ENCODE measurements at regions of chr10 and their contacts with region 1.

Region 1: DNA sequence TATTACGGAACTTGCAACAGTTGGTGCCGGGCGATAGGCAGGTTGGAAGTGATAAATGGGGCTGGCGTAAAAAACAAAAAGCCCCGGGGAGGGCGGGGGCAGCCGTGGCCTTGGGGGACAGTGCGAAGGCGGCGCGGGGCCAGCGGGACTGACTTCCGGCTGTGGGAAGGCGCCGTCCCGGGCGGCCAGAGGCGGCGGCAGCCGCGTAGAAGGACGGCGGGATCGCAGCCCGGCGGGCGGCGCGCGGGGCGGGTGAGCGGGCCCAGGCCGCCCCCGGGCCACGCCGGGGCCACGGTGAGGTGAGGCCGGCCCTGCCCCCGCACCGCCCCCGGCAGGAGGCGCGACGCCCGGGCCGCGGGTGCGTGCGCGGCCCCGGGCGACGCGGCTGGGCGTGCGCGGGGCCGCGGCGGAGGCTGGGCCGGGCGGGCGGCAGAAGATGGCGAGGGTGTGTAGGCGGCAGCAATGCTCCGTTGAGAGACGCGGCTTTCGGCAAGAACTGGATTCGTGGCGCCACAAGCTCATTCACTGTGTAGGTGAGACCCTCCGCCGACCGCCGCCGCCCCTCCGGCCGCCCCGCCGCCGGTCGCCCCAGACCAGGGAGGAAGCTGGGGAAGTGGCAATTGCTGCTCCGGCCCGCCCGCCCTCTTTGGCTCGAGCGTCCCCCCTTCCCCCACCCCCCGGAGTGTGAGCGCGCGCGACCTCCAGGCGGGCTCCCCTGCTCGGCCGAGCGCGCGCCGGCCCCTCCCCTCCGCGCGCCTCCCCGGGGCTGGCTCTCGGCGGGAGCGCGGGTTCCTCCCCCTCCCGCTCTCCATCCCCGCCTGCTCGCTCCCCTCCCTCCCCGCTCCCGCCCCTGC is at the start of gene LCOR:
- DNase-seq: peak; percentile 66 to 94 (median 80)
- ATAC-seq: peak; percentile 69
- H3K4me3 ChIP-seq: peak within 1 kb of the TSS; percentile 72 to 76
- H3K4me3 Mint-ChIP-seq: peak within 1 kb of the TSS; percentile 89
- H3K27ac ChIP-seq: peak within 1 kb of the TSS; percentile 64 to 71
- H3K27ac Mint-ChIP-seq: peak within 1 kb of the TSS; percentile 97
- H3K4me1 ChIP-seq: peaks cover 25% of the 10 kb centered on the region
- H3K4me1 Mint-ChIP-seq: peaks cover 47% of the 10 kb centered on the region
- H3K27me3 ChIP-seq: no peaks in the 10 kb centered on the region
- H3K27me3 Mint-ChIP-seq: no peaks in the 10 kb centered on the region
- CTCF ChIP-seq: no peak
- total RNA-seq, gene LCOR: 57.9 to 62.0 TPM

Region 2: DNA sequence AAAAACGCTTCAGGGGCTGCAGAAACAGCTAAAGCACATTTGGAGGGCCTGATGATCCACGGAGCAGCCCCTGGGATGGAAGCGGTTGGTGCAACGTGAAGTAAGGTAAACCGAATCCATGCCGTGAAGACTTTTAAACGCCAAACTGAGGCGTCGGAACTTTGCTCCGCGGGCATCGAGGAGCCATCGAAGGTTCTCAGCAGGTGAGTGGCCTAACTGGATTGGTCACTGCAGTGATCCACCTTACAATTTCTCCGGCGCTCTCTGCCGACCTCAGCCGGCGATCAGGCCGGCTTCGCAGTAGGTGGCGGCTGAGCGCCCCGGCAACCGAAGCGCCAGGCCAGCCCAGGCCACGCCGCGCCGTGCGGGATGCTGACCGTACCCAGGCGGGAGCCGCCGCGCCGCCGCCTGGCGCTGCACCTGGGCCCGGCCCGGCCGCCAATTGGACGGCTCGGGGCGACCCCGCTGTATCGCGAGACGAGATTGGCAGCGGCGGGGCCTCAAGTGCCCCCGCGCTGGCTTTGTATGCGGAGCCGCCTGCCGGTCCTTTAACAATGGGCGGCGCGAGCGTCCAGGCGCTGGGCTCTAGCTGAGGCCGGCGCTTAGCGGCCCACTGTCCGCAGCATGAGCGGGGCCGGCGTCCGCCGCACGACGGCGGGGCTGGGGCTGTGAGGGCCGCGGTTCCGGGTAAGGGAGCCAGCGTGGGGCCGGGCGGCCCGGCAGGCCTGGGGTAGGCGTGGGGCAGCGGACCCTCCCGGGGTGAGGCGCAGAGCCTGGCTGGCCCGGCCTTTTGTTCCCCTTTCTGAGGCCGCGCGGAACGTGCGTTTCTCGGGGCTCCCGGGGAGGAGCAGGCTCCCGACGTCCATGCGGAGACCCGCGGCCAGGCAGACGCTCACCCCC is 788.8 kb before region 1 on chr10 and contains the start of gene CCNJ:
- CTCF ChIA-PET with region 1: no interaction called
- POLR2A ChIA-PET with region 1: no interaction called
- intact Hi-C with region 1: loop called in 1 of 2 experiments (anchors 10 kb)
- DNase-seq: peak; percentile 64 to 91 (median 82)
- ATAC-seq: peak; percentile 87
- H3K4me3 ChIP-seq: peak within 1 kb of the TSS; percentile 81 to 92
- H3K4me3 Mint-ChIP-seq: peak within 1 kb of the TSS; percentile 94
- H3K27ac ChIP-seq: peak within 1 kb of the TSS; percentile 70
- H3K27ac Mint-ChIP-seq: peak within 1 kb of the TSS; percentile 90
- H3K4me1 ChIP-seq: peaks cover 18% of the 10 kb centered on the region
- H3K4me1 Mint-ChIP-seq: peaks cover 48% of the 10 kb centered on the region
- H3K27me3 ChIP-seq: no peaks in the 10 kb centered on the region
- H3K27me3 Mint-ChIP-seq: peaks cover 5% of the 10 kb centered on the region
- CTCF ChIP-seq: no peak
- total RNA-seq, gene CCNJ: 10.0 to 10.7 TPM

Region 3: DNA sequence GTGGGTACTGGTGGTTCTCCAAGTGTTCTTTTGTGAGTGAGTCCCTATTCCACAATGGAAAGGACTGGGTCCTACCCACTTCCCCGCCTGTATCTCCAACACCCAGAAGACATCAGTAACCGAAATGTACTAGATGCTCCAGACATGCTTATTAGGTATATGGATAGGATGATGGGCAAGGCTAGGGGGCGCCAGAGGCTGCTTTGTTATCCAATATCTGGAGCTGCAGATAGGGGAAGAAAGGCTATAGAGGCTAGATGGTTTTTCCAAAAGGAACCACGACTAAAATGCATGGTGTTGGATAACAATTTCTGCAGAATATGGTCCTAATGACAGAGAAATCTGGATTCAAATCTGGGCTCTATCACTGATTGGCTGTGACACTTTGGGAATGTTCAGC is 189.1 kb before region 1 on chr10:
- CTCF ChIA-PET with region 1: interaction called, 9 read pairs
- POLR2A ChIA-PET with region 1: no interaction called
- intact Hi-C with region 1: loop called (anchors 1 kb)
- DNase-seq: peak; percentile 26 to 78 (median 59)
- ATAC-seq: peak; percentile 41
- H3K4me3 ChIP-seq: no peak overlapping the region
- H3K4me3 Mint-ChIP-seq: no peak overlapping the region
- H3K27ac ChIP-seq: no peak overlapping the region
- H3K27ac Mint-ChIP-seq: no peak overlapping the region
- H3K4me1 ChIP-seq: no peaks in the 10 kb centered on the region
- H3K4me1 Mint-ChIP-seq: peaks cover 12% of the 10 kb centered on the region
- H3K27me3 ChIP-seq: no peaks in the 10 kb centered on the region
- H3K27me3 Mint-ChIP-seq: no peaks in the 10 kb centered on the region
- CTCF ChIP-seq: peak; percentile 25

Region 4: DNA sequence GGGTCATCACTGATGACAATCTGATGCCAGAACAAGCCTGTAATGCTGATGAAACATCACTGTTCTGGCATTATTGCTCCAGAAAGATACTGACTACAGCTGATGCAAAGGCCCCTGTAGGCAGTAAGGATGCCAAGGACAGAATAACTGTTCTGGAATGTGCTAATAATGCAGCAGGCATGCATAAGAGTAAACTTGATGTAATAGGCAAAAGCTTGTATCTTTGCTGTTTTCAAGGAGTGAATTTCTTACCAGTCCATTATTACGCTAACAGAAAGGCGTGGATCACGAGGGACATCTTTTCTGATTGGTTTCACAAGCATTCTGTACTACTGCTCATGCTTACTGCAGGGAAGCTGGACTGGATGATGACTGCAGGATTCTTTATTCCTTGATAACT is 18.7 kb after region 1 on chr10:
- CTCF ChIA-PET with region 1: no interaction called
- POLR2A ChIA-PET with region 1: no interaction called
- intact Hi-C with region 1: loop called in 1 of 2 experiments (anchors 2 kb)
- DNase-seq: no peak
- ATAC-seq: no peak
- H3K4me3 ChIP-seq: no peak overlapping the region
- H3K4me3 Mint-ChIP-seq: no peak overlapping the region
- H3K27ac ChIP-seq: no peak overlapping the region
- H3K27ac Mint-ChIP-seq: no peak overlapping the region
- H3K4me1 ChIP-seq: no peaks in the 10 kb centered on the region
- H3K4me1 Mint-ChIP-seq: peaks cover 67% of the 10 kb centered on the region
- H3K27me3 ChIP-seq: no peaks in the 10 kb centered on the region
- H3K27me3 Mint-ChIP-seq: no peaks in the 10 kb centered on the region
- CTCF ChIP-seq: no peak

Region 5: GRCh38 chr10:97498076-97498840 is 666.2 kb after region 1 on chr10 and contains the start of gene MMS19:
- CTCF ChIA-PET with region 1: no interaction called
- POLR2A ChIA-PET with region 1: no interaction called
- intact Hi-C with region 1: loop called in 1 of 2 experiments (anchors 5 kb)
- DNase-seq: peak; percentile 98 to 100 (median 99)
- ATAC-seq: peak; percentile 78
- H3K4me3 ChIP-seq: peak within 1 kb of the TSS; percentile 73 to 76
- H3K4me3 Mint-ChIP-seq: peak within 1 kb of the TSS; percentile 97
- H3K27ac ChIP-seq: peak within 1 kb of the TSS; percentile 73 to 83
- H3K27ac Mint-ChIP-seq: peak within 1 kb of the TSS; percentile 96
- H3K4me1 ChIP-seq: peaks cover 42% of the 10 kb centered on the region
- H3K4me1 Mint-ChIP-seq: peaks cover 42% of the 10 kb centered on the region
- H3K27me3 ChIP-seq: peaks cover 4 to 5% of the 10 kb centered on the region in 2 experiments
- H3K27me3 Mint-ChIP-seq: peaks cover 15% of the 10 kb centered on the region
- CTCF ChIP-seq: no peak
- total RNA-seq, gene MMS19: 48.4 to 49.5 TPM

Region 6: DNA sequence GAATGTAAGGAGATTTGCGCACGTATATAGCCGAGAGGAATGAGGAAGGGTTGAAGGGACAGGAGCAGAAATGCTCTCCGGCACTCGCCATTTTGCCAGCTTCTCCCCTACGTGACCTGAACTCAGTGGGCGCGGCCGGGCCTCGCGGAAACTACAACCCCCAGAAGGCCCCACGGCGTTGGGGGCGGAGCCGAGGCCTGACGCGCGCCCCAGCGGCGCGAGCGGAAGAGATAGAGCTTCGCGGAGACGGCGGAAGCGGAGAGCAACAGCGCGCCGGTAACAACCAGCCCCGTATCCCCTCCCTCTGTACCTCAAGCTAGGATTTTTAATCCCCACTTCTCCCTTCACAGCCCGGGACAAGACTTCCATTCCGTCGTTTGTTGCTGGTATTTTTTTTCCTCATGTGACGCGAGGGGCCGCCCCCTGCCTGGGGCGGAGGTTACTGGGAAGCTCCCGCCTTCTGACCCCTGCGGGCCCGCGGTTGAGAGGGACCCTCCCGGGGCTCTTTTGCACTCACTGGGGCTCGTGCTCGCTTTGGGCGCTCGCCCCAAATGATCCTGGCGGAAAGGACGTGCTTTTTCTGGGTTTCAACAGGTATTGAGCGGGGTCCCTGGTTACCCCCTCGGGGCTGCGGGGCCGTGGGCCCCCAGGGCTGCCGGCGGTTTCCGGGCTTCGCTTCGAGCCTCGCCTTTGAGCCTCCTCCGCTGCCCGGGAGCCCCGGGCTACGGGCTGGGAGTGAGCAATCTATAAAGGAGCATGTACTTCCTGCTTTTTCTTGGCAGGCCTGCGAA is 1302.5 kb after region 1 on chr10 and contains the start of gene R3HCC1L:
- CTCF ChIA-PET with region 1: no interaction called
- POLR2A ChIA-PET with region 1: no interaction called
- intact Hi-C with region 1: loop called (anchors 5 to 10 kb)
- DNase-seq: peak; percentile 87 to 96 (median 93)
- ATAC-seq: peak; percentile 95
- H3K4me3 ChIP-seq: peak within 1 kb of the TSS; percentile 85
- H3K4me3 Mint-ChIP-seq: peak within 1 kb of the TSS; percentile 92
- H3K27ac ChIP-seq: peak within 1 kb of the TSS; percentile 91 to 93
- H3K27ac Mint-ChIP-seq: peak within 1 kb of the TSS; percentile 97
- H3K4me1 ChIP-seq: peaks cover 23% of the 10 kb centered on the region
- H3K4me1 Mint-ChIP-seq: peaks cover 48% of the 10 kb centered on the region
- H3K27me3 ChIP-seq: no peaks in the 10 kb centered on the region
- H3K27me3 Mint-ChIP-seq: no peaks in the 10 kb centered on the region
- CTCF ChIP-seq: no peak
- total RNA-seq, gene R3HCC1L: 13.6 to 13.7 TPM

Measured in CD8-positive, alpha-beta T cell (primary cell).